Pancreas (tissue), 10 donors: ENCODE measurements at regions of chr1 and their contacts with region 1.

Region 1: DNA sequence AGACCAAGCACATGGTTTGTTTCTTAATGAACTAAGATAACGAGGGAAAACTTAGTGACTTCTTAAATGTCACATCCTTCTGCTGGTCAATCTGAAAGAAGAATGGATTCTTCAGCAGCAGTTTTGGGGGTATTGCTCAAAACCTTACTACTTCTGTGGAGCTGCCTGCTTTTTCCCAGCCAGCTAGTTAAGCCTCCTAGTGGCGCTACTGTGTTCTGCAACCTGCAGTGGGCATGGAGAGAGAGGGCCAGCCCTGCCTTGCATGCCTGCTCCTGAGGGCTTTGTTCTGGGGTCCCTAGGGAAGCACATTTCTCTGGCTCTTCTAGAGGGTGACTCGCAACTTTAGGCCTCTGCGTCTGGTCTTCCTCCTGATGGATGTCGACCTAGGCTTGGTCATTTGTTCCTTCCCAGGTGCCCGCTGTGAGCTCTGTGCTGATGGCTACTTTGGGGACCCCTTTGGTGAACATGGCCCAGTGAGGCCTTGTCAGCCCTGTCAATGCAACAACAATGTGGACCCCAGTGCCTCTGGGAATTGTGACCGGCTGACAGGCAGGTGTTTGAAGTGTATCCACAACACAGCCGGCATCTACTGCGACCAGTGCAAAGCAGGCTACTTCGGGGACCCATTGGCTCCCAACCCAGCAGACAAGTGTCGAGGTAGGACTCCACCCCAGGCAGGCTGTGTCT is 42.0 kb downstream of the LAMC2 start:
- DNase-seq: peak in 2 of 6 donors; percentile 42 to 68
- ATAC-seq: peak in 3 of 4 donors; percentile 70 to 81 (median 77)
- H3K4me3 ChIP-seq: no peak overlapping the region
- H3K27ac ChIP-seq: no peak overlapping the region
- H3K4me1 ChIP-seq: no peaks in the 10 kb centered on the region
- H3K27me3 ChIP-seq: no peaks in the 10 kb centered on the region
- CTCF ChIP-seq: peak; percentile 35 to 62 (median 48)

Region 2: GRCh38 chr1:182927693-182928433 is 300.2 kb before region 1 on chr1:
- intact Hi-C with region 1: no loop called
- DNase-seq: no peak
- ATAC-seq: no peak
- H3K4me3 ChIP-seq: no peak overlapping the region
- H3K27ac ChIP-seq: no peak overlapping the region
- H3K4me1 ChIP-seq: no peaks in the 10 kb centered on the region
- H3K27me3 ChIP-seq: no peaks in the 10 kb centered on the region
- CTCF ChIP-seq: no peak

Region 3: GRCh38 chr1:182955596-182956588 is 272.2 kb before region 1 on chr1:
- intact Hi-C with region 1: loop called in 2 of 3 experiments (anchors 10 kb)
- DNase-seq: no peak
- ATAC-seq: peak in 1 of 4 donors; percentile 64
- H3K4me3 ChIP-seq: no peak overlapping the region
- H3K27ac ChIP-seq: no peak overlapping the region
- H3K4me1 ChIP-seq: no peaks in the 10 kb centered on the region
- H3K27me3 ChIP-seq: peaks cover 0 to 6% (median 2%) of the 10 kb centered on the region in 4 donors
- CTCF ChIP-seq: no peak

Region 4: DNA sequence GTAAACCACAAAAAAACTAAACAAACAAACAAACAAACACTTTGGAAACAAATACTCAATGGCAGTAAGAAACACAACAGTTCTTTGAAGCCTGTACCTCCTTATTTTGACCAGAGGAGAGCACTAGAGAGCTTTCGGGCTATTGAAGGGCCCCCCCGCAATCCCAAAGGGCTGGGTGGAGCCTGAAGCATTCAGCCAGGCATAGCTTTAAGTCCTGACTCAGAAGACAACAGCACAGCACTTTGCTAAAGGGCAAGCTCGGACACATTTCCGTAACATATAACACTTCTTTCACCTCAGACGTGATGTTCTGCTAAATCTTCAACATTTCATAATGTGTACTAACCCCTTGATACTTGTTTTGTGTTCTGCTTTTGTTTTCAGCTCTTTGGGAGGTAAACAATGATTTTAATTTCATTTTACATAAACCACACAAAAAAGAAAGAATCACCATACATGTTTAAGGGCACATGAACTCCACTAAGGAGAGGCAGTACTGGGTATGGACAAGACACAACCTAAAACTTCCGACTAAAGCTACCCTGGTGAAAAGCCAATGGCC is 265.5 kb before region 1 on chr1:
- intact Hi-C with region 1: loop called in 2 of 3 experiments (anchors 10 kb)
- DNase-seq: peak; percentile 64 to 80 (median 68)
- ATAC-seq: peak; percentile 100
- H3K4me3 ChIP-seq: no peak overlapping the region
- H3K27ac ChIP-seq: peak overlapping the region in 2 of 4 donors; percentile 11 to 30
- H3K4me1 ChIP-seq: no peaks in the 10 kb centered on the region
- H3K27me3 ChIP-seq: no peaks in the 10 kb centered on the region
- CTCF ChIP-seq: peak; percentile 60 to 80 (median 79)

Region 5: GRCh38 chr1:183051546-183051945 is 176.6 kb before region 1 on chr1:
- intact Hi-C with region 1: no loop called
- DNase-seq: no peak
- ATAC-seq: no peak
- H3K4me3 ChIP-seq: no peak overlapping the region
- H3K27ac ChIP-seq: no peak overlapping the region
- H3K4me1 ChIP-seq: peaks cover 0 to 4% (median 0%) of the 10 kb centered on the region in 3 donors
- H3K27me3 ChIP-seq: no peaks in the 10 kb centered on the region
- CTCF ChIP-seq: no peak

Region 6: GRCh38 chr1:183291802-183292514 is 63.9 kb after region 1 on chr1:
- intact Hi-C with region 1: no loop called
- DNase-seq: no peak
- ATAC-seq: peak in 1 of 4 donors; percentile 27
- H3K4me3 ChIP-seq: no peak overlapping the region
- H3K27ac ChIP-seq: no peak overlapping the region
- H3K4me1 ChIP-seq: peaks cover 0 to 6% (median 0%) of the 10 kb centered on the region in 3 donors
- H3K27me3 ChIP-seq: no peaks in the 10 kb centered on the region
- CTCF ChIP-seq: no peak

Region 7: GRCh38 chr1:183590244-183591191 is 362.4 kb after region 1 on chr1 and contains the start of gene NCF2:
- intact Hi-C with region 1: no loop called
- DNase-seq: peak in 1 of 6 donors; percentile 42
- ATAC-seq: peak in 3 of 4 donors; percentile 46 to 85 (median 85)
- H3K4me3 ChIP-seq: peak within 1 kb of the TSS in 1 of 4 donors; percentile 20
- H3K27ac ChIP-seq: peak within 1 kb of the TSS in 2 of 4 donors; percentile 23 to 62
- H3K4me1 ChIP-seq: no peaks in the 10 kb centered on the region
- H3K27me3 ChIP-seq: no peaks in the 10 kb centered on the region
- CTCF ChIP-seq: no peak
- total RNA-seq, gene NCF2: 0.65 to 24.5 (median 2.1) TPM